ENCODE measurements at regions of chr14 and their contacts with region 1.

Region 1: GRCh38 chr14:23953464-23954278 is at the start of gene DHRS4:
- DNase-seq: peak; percentile 94
- ATAC-seq: peak; percentile 98
- H3K4me3 ChIP-seq: peak within 1 kb of the TSS; percentile 73 to 90 (median 85)
- H3K27ac ChIP-seq: peak within 1 kb of the TSS; percentile 74
- H3K4me1 ChIP-seq: peaks cover 27% of the 10 kb centered on the region
- H3K27me3 ChIP-seq: no peaks in the 10 kb centered on the region
- CTCF ChIP-seq: peak; percentile 100
- EP300 ChIP-seq: peak; percentile 6 to 60; a peak in 3 of 4 replicates
- POLR2A ChIP-seq: peak; percentile 97 to 99
- RAD21 ChIP-seq: peak; percentile 93
- total RNA-seq, gene DHRS4: 45.1 and 49.4 TPM in 2 replicates

Region 2: DNA sequence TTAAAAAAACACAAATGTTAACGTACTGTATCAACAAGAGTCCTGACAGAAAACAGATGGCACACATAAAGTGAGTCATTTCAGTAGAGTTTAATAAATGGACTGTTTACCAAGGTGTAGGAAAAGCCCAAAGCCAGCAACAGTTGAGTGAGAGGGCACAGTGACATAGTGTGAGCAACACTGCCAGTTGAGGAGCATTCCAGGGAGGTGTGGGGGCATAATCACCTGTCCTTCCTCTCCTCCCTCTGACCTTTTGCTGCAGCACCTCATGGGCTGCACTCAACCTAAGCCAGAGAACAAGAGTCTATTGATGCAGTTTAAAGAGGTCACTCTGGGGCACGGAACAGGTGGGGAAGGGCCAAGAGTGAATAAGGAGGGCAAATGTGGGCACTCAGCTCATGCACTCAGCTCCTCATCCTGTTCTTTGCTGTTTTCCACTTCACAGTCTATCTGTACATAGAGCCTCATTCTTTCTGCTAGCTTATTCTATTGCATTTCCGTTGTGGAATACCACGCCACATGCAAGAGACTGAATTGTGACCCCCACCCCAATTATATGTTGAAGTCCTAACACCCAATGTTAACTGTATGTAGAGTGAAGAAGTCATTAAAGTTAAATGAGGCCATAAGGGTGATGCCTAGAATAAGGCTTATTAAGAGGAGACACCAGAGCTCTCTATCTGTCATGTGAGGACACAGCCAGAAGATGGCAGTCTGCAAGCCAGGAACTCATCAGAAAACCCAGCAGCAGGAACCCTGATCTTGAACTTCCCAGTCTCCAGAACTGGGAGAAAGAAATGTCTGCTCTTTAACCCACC is 288.1 kb before region 1 on chr14:
- CTCF ChIA-PET with region 1: interaction called, 9 read pairs
- POLR2A ChIA-PET with region 1: no interaction called
- in situ Hi-C with region 1: no loop called
- intact Hi-C with region 1: loop called (anchors 1 kb)
- DNase-seq: peak; percentile 85
- ATAC-seq: peak; percentile 87
- H3K4me3 ChIP-seq: no peak overlapping the region
- H3K27ac ChIP-seq: no peak overlapping the region
- H3K4me1 ChIP-seq: peaks cover 17% of the 10 kb centered on the region
- H3K27me3 ChIP-seq: peaks cover 2 to 11% of the 10 kb centered on the region in 2 experiments; a peak in 3 of 5 replicates
- CTCF ChIP-seq: peak; percentile 92
- EP300 ChIP-seq: no peak
- POLR2A ChIP-seq: no peak
- RAD21 ChIP-seq: peak; percentile 89

Region 3: DNA sequence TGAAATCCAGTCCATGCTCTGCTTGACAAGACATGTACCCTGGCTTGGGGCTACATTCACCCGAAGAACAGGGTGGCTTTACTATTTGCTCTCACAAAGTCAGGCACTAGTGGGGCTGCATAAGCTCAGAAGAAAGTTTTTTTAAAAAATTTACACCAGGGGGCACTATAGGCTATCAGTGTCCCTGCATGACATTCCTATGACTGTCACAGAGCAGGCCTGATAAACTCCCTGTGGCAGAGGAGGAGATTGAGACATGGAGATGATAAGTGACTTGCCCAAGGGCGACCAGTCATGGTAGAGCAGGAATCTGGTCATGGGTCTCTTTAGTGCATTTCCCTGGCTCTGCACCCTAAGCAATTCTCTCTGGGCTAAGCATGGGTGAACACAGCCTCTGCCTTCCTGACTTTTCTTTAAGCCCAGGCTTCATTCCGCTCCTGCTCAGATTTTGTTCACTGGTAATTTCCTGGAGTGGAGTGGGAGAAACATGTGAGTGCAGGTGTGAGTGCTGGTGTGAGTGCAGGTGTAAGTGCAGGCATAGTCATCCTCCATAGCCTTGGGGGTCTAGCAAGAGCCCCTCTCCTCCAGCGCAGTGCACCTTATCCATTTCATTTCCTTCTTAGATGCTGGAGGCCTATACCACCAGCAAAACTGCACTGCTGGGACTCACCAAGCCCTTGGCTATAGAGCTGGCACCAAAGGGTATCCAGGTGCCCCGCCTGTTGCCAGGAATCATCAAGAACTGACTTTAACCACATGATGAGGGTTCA is 225.9 kb before region 1 on chr14:
- CTCF ChIA-PET with region 1: interaction called, 15 read pairs
- POLR2A ChIA-PET with region 1: no interaction called
- in situ Hi-C with region 1: no loop called
- intact Hi-C with region 1: no loop called
- DNase-seq: peak; percentile 90
- ATAC-seq: peak; percentile 88
- H3K4me3 ChIP-seq: no peak overlapping the region
- H3K27ac ChIP-seq: no peak overlapping the region
- H3K4me1 ChIP-seq: peaks cover 6% of the 10 kb centered on the region
- H3K27me3 ChIP-seq: no peaks in the 10 kb centered on the region; a peak in 1 of 5 replicates
- CTCF ChIP-seq: peak; percentile 91
- EP300 ChIP-seq: no peak
- POLR2A ChIP-seq: no peak
- RAD21 ChIP-seq: peak; percentile 90

Region 4: DNA sequence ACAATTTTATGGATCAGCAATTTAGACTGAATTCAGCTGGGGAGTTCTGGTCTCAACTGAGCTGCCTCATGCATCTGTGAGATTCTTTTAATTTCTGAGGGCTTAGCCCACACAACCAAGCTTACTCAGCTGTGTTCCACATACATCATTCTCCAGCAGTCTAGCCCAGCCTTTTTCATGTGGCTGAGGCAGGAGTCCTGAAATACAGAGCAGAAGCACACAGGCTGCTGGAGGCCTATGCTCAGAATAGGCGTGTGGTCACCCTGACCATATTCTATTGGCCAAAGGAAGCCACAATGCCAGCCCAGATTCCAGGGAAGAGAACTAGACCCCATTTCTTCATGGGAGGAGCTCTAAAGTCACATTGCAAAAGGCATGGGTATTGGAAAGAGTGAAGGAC is 72.4 kb before region 1 on chr14:
- CTCF ChIA-PET with region 1: no interaction called
- POLR2A ChIA-PET with region 1: interaction called, 5 read pairs
- in situ Hi-C with region 1: no loop called
- intact Hi-C with region 1: loop called (anchors 5 kb)
- DNase-seq: no peak
- ATAC-seq: no peak
- H3K4me3 ChIP-seq: no peak overlapping the region
- H3K27ac ChIP-seq: no peak overlapping the region
- H3K4me1 ChIP-seq: peaks cover 39% of the 10 kb centered on the region
- H3K27me3 ChIP-seq: peaks cover 0 to 9% of the 10 kb centered on the region in 2 experiments; a peak in 1 of 5 replicates
- CTCF ChIP-seq: no peak
- EP300 ChIP-seq: no peak
- POLR2A ChIP-seq: no peak
- RAD21 ChIP-seq: no peak

Region 5: GRCh38 chr14:23895480-23895879 is 58.2 kb before region 1 on chr14:
- CTCF ChIA-PET with region 1: no interaction called
- POLR2A ChIA-PET with region 1: no interaction called
- in situ Hi-C with region 1: no loop called
- intact Hi-C with region 1: loop called (anchors 1 kb)
- DNase-seq: peak; percentile 42
- ATAC-seq: peak; percentile 72
- H3K4me3 ChIP-seq: no peak overlapping the region
- H3K27ac ChIP-seq: no peak overlapping the region
- H3K4me1 ChIP-seq: peaks cover 11% of the 10 kb centered on the region
- H3K27me3 ChIP-seq: 0 out of 5 replicates have a peak, but pooled peaks cover 0 to 3% of the 10 kb centered on the region in 2 experiments
- CTCF ChIP-seq: peak; percentile 56
- EP300 ChIP-seq: no peak
- POLR2A ChIP-seq: no peak
- RAD21 ChIP-seq: 0 out of 2 replicates have a peak, but pooled peaks have one; percentile 32

Region 6: DNA sequence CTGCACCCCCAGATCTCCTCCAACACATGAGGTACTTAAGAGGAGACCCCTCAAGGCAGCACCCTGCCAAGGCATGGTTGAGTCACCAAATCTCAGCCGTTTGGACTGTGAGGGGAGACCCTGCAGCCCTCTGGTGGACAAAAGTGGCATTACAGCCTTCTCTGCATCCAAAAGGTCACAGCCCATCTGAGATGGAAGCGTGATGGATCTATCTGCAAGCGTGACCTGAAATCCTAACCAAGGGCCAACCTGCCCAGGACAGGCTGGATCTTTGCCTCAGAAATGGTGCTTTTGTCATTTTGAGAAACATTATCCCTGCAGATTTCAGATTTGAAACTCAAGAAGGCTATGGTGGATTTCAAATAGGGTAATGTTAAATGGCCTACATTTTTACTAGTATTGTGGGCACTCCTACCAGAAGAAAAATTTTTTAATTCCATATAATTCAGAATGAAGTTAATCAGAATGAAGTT is 23.8 kb before region 1 on chr14:
- CTCF ChIA-PET with region 1: interaction called, 18 read pairs
- POLR2A ChIA-PET with region 1: no interaction called
- in situ Hi-C with region 1: no loop called
- intact Hi-C with region 1: loop called (anchors 1 kb)
- DNase-seq: peak; percentile 87
- ATAC-seq: peak; percentile 94
- H3K4me3 ChIP-seq: no peak overlapping the region
- H3K27ac ChIP-seq: no peak overlapping the region
- H3K4me1 ChIP-seq: peaks cover 11% of the 10 kb centered on the region
- H3K27me3 ChIP-seq: no peaks in the 10 kb centered on the region
- CTCF ChIP-seq: peak; percentile 93
- EP300 ChIP-seq: no peak
- POLR2A ChIP-seq: no peak
- RAD21 ChIP-seq: peak; percentile 87

Measured in HepG2 (cell line).